B cell (primary cell): ENCODE measurements at regions of chr2 and their contacts with region 1.

Region 1: GRCh38 chr2:60550178-60550983 is 3.1 kb downstream of the BCL11A start:
- DNase-seq: peak; percentile 94
- ATAC-seq: peak; percentile 54
- H3K4me3 ChIP-seq: peak overlapping the region; percentile 78 to 98 (median 88)
- H3K4me3 Mint-ChIP-seq: peak overlapping the region; percentile 97
- H3K27ac ChIP-seq: peak overlapping the region; percentile 77 to 91
- H3K27ac Mint-ChIP-seq: peak overlapping the region; percentile 91
- H3K4me1 ChIP-seq: peaks cover 29 to 35% of the 10 kb centered on the region in 2 donors
- H3K4me1 Mint-ChIP-seq: peaks cover 36% of the 10 kb centered on the region
- H3K27me3 ChIP-seq: no peaks in the 10 kb centered on the region
- H3K27me3 Mint-ChIP-seq: no peaks in the 10 kb centered on the region
- CTCF ChIP-seq: peak; percentile 80

Region 2: DNA sequence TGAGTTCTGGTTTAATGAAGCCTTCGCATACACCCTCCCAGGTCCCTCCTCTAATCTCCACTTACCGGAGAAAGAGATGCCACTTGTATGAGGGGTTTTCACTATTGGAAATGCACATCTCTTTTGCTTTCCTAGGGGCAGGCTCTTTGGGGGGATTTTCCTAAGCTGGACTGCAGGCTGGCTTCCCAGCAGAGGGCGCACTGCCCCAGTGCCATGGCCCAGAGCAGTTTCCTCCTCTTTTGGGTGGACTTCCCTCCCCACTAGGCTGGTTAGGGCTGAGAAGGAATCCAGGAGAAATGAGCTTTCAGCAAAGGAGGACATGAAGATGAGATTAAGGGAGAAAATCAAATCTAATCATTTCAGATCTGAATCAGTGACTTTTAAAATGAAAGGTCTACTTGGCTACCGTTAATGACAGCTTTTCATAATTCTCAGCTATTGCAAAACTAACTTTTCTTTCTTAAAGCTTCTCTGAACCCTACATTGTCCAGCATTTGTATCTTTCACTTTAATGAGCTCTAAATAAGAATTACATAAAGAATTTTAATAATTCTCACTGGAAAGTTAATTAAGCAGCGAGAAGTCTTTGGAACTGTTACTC is 1525.1 kb before region 1 on chr2:
- CTCF ChIA-PET with region 1: interaction called, 36 read pairs
- POLR2A ChIA-PET with region 1: no interaction called
- intact Hi-C with region 1: no loop called
- DNase-seq: peak; percentile 71
- ATAC-seq: peak; percentile 66
- H3K4me3 ChIP-seq: no peak overlapping the region
- H3K4me3 Mint-ChIP-seq: peak overlapping the region; percentile 28
- H3K27ac ChIP-seq: no peak overlapping the region
- H3K27ac Mint-ChIP-seq: no peak overlapping the region
- H3K4me1 ChIP-seq: peaks cover 0 to 3% of the 10 kb centered on the region in 2 donors
- H3K4me1 Mint-ChIP-seq: peaks cover 2% of the 10 kb centered on the region
- H3K27me3 ChIP-seq: peaks cover 0 to 2% (median 0%) of the 10 kb centered on the region in 4 experiments
- H3K27me3 Mint-ChIP-seq: peaks cover 17% of the 10 kb centered on the region
- CTCF ChIP-seq: peak; percentile 86

Region 3: DNA sequence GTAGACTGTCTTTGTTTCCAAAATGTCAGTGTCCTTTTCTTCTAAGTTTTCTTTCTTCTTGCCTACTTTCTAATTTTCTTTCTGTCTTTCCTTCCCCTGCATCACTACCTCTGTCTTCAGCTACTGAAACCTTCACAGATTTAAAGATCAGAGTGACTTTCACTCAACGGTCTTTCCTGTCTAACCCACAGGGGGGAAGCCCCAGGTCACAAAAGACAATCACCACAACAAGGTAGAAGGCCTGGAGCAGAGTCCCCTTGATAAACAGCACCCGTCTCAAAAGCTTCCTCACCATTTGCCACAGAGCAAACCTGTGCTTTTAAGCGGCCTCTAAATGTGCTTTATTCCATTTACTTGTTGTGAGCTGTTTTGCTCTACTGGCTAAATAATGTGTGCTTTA is 662.4 kb before region 1 on chr2:
- CTCF ChIA-PET with region 1: interaction called, 29 read pairs
- POLR2A ChIA-PET with region 1: interaction called, 10 read pairs
- intact Hi-C with region 1: loop called (anchors 2 kb)
- DNase-seq: peak; percentile 73
- ATAC-seq: peak; percentile 96
- H3K4me3 ChIP-seq: peak overlapping the region in 1 of 5 experiments; percentile 33
- H3K4me3 Mint-ChIP-seq: peak overlapping the region; percentile 38
- H3K27ac ChIP-seq: peak overlapping the region; percentile 66 to 83
- H3K27ac Mint-ChIP-seq: peak overlapping the region; percentile 70
- H3K4me1 ChIP-seq: peaks cover 36 to 37% of the 10 kb centered on the region in 2 donors
- H3K4me1 Mint-ChIP-seq: peaks cover 31% of the 10 kb centered on the region
- H3K27me3 ChIP-seq: no peaks in the 10 kb centered on the region
- H3K27me3 Mint-ChIP-seq: no peaks in the 10 kb centered on the region
- CTCF ChIP-seq: peak; percentile 22

Region 4: GRCh38 chr2:60353406-60353800 is 197.0 kb before region 1 on chr2:
- CTCF ChIA-PET with region 1: interaction called, 23 read pairs
- POLR2A ChIA-PET with region 1: interaction called, 64 read pairs
- intact Hi-C with region 1: loop called (anchors 1 kb)
- DNase-seq: no peak
- ATAC-seq: peak; percentile 1
- H3K4me3 ChIP-seq: peak overlapping the region in 2 of 5 experiments; percentile 8 to 10
- H3K4me3 Mint-ChIP-seq: peak overlapping the region; percentile 54
- H3K27ac ChIP-seq: peak overlapping the region; percentile 95
- H3K27ac Mint-ChIP-seq: peak overlapping the region; percentile 99
- H3K4me1 ChIP-seq: peaks cover 98% of the 10 kb centered on the region in 2 donors
- H3K4me1 Mint-ChIP-seq: peaks cover 98% of the 10 kb centered on the region
- H3K27me3 ChIP-seq: no peaks in the 10 kb centered on the region
- H3K27me3 Mint-ChIP-seq: no peaks in the 10 kb centered on the region
- CTCF ChIP-seq: no peak

Region 5: GRCh38 chr2:60498816-60499429 is 51.5 kb before region 1 on chr2:
- CTCF ChIA-PET with region 1: interaction called, 11 read pairs
- POLR2A ChIA-PET with region 1: interaction called, 10 read pairs
- intact Hi-C with region 1: loop called (anchors 2 kb)
- DNase-seq: peak; percentile 77
- ATAC-seq: peak; percentile 68
- H3K4me3 ChIP-seq: peak overlapping the region in 1 of 5 experiments; percentile 22
- H3K4me3 Mint-ChIP-seq: peak overlapping the region; percentile 74
- H3K27ac ChIP-seq: peak overlapping the region; percentile 80 to 93
- H3K27ac Mint-ChIP-seq: peak overlapping the region; percentile 88
- H3K4me1 ChIP-seq: peaks cover 99% of the 10 kb centered on the region in 2 donors
- H3K4me1 Mint-ChIP-seq: peaks cover 96% of the 10 kb centered on the region
- H3K27me3 ChIP-seq: no peaks in the 10 kb centered on the region
- H3K27me3 Mint-ChIP-seq: no peaks in the 10 kb centered on the region
- CTCF ChIP-seq: no peak

Region 6: GRCh38 chr2:60535685-60536312 is 14.6 kb before region 1 on chr2:
- CTCF ChIA-PET with region 1: interaction called, 16 read pairs
- POLR2A ChIA-PET with region 1: interaction called, 6 read pairs
- intact Hi-C with region 1: loop called (anchors 2 kb)
- DNase-seq: no peak
- ATAC-seq: peak; percentile 55
- H3K4me3 ChIP-seq: peak overlapping the region in 2 of 5 experiments; percentile 13
- H3K4me3 Mint-ChIP-seq: peak overlapping the region; percentile 70
- H3K27ac ChIP-seq: peak overlapping the region; percentile 23 to 80
- H3K27ac Mint-ChIP-seq: peak overlapping the region; percentile 69
- H3K4me1 ChIP-seq: peaks cover 89 to 99% of the 10 kb centered on the region in 2 donors
- H3K4me1 Mint-ChIP-seq: peaks cover 91% of the 10 kb centered on the region
- H3K27me3 ChIP-seq: no peaks in the 10 kb centered on the region
- H3K27me3 Mint-ChIP-seq: no peaks in the 10 kb centered on the region
- CTCF ChIP-seq: no peak